A673 (cell line): ENCODE measurements at regions of chr1 and their contacts with region 1.

Region 1: DNA sequence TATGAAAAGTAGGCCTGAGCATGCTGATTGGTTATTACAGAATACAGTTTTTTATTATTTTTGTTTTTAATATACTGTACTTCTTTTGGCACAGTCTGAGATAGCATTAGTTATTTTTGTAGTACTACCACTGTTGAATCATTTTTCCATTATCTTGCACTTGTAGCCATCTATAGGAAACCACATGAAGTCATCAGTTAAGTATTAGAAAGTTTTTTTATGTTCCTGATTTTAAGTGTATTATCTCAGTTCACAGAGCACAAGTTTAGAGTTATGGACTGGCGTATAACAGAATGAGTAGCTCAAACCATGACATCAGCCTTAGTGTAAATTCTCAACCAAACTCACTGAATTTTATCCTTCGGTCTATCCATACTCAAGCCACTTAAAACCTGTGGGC is 22.8 kb downstream of the DHX9 start:
- DNase-seq: no peak
- H3K4me3 ChIP-seq: no peak overlapping the region
- H3K27ac ChIP-seq: no peak overlapping the region
- H3K4me1 ChIP-seq: no peaks in the 10 kb centered on the region
- H3K27me3 ChIP-seq: no peaks in the 10 kb centered on the region
- CTCF ChIP-seq: no peak

Region 2: GRCh38 chr1:182877842-182878241 is 15.8 kb after region 1 on chr1:
- CTCF ChIA-PET with region 1: no interaction called
- POLR2A ChIA-PET with region 1: no interaction called
- intact Hi-C with region 1: loop called (anchors 2 kb)
- DNase-seq: no peak
- H3K4me3 ChIP-seq: no peak overlapping the region
- H3K27ac ChIP-seq: no peak overlapping the region
- H3K4me1 ChIP-seq: no peaks in the 10 kb centered on the region
- H3K27me3 ChIP-seq: no peaks in the 10 kb centered on the region
- CTCF ChIP-seq: no peak

Region 3: GRCh38 chr1:182977480-182977879 is 115.5 kb after region 1 on chr1:
- CTCF ChIA-PET with region 1: no interaction called
- POLR2A ChIA-PET with region 1: no interaction called
- intact Hi-C with region 1: no loop called
- DNase-seq: no peak
- H3K4me3 ChIP-seq: no peak overlapping the region
- H3K27ac ChIP-seq: no peak overlapping the region
- H3K4me1 ChIP-seq: no peaks in the 10 kb centered on the region
- H3K27me3 ChIP-seq: no peaks in the 10 kb centered on the region
- CTCF ChIP-seq: no peak